ENCODE measurements at regions of chr2 and their contacts with region 1.

Region 1: GRCh38 chr2:98465456-98466226 is 21.0 kb downstream of the INPP4A start:
- DNase-seq: peak; percentile 78
- ATAC-seq: peak; percentile 16
- H3K4me3 Mint-ChIP-seq: peak overlapping the region; percentile 69
- H3K27ac Mint-ChIP-seq: peak overlapping the region; percentile 96
- H3K4me1 Mint-ChIP-seq: peaks cover 90% of the 10 kb centered on the region
- H3K27me3 Mint-ChIP-seq: no peaks in the 10 kb centered on the region

Region 2: DNA sequence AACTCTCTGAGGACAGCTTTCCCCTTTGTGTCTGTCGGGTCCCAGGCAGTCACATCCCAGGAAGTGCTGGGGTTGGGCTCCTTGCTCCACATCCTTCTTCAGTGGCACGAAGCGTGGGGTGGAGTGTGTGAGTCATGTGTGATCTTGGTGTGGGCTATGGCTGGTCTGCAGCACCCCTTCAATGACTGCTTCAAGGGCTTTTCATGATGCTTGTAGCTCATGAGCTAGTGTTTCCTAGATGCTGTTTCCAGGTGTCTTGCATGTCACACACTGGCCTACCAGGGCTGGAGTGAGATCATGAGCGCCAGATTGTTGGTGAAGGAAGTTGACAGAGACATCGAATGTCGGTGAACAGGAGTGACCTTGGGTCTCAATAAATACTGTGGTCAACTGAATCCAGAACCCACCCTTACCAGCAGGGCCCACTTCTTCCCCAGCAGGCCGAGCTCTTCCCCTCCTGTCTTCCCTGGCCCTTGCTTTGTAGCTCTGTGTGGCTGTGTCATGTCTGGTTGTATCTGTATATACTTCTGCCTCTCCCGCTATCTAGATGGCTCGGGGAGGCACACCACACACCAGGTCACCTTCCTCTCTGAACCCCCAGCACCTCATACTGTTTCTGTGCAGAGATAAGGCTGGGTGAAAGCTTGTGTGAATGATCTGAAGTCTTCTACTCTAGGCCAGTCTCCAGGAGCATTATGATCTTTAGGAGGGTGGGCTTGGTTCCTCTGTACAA is 792.3 kb before region 1 on chr2:
- CTCF ChIA-PET with region 1: no interaction called
- POLR2A ChIA-PET with region 1: no interaction called
- intact Hi-C with region 1: no loop called
- DNase-seq: peak; percentile 69
- ATAC-seq: peak; percentile 75
- H3K4me3 Mint-ChIP-seq: peak overlapping the region; percentile 6
- H3K27ac Mint-ChIP-seq: peak overlapping the region; percentile 84
- H3K4me1 Mint-ChIP-seq: peaks cover 35% of the 10 kb centered on the region
- H3K27me3 Mint-ChIP-seq: no peaks in the 10 kb centered on the region

Region 3: DNA sequence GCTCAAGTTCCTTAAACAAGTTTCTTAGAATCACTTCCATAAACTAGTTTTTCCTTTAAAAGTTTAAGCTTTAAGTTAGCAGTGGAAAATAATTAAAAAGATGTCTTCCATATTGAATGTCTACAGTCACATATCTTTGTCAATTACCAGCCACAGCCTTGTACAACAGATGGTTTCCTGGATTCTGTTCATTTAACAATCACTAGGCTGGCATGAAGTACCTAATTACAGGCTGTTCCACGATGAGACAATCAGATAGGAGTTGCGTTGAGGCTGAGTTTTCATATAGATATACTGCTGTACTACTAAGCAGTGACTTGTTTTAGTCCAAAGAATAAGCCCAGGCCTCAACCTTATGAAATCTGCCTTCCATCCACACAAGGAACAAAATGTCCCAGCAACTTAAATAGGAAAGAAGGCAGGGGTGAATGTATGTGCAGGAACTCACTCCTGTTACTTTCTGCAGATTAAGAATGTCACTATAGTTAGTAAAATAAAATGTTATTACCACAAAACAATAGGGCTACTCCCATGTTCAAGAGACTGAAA is 621.3 kb before region 1 on chr2:
- CTCF ChIA-PET with region 1: no interaction called
- POLR2A ChIA-PET with region 1: no interaction called
- intact Hi-C with region 1: no loop called
- DNase-seq: no peak
- ATAC-seq: no peak
- H3K4me3 Mint-ChIP-seq: no peak overlapping the region
- H3K27ac Mint-ChIP-seq: no peak overlapping the region
- H3K4me1 Mint-ChIP-seq: peaks cover 11% of the 10 kb centered on the region
- H3K27me3 Mint-ChIP-seq: no peaks in the 10 kb centered on the region

Region 4: DNA sequence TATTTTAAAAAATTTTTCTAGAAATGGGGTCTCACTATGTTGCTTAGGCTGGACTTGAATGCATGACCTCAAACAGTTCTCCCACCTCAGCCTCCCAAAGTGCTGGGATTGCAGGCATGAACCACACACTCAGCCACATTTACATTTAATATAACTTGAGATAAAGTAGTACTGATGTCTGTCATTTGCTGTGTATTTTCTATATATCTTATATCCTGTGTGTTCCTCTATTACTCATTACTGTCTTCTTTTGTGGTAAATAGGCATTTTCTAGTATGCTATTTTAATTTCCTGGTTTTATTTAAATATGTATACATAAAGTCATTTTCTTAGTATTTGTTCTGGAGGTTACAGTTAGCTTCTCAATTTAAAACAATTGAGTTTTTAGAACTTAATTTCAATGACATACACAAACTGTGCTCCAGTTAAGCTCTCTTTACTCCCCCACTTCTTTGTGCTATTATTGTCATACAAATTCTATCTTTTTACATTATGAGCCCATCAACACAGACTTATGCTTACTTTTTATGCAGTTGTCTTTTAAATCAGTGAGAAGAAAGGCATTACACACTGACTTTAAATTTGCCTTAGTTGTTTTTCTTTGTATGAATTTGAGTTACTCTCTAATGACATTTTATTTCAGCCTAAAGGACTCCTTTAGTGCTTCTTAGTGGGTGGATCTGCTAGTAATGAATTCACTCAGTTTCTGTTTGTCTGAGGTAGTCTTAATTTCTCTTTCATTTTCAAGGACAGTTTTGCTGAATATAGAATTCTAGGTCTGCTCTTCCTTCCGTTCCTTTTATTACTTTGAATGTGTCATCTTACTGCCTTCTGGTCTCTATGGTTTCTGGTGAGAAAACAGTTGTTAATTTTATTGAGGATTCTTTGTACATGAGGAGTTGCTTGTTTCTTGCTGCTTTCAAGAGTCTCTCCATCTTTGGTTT is 27.2 kb before region 1 on chr2:
- CTCF ChIA-PET with region 1: interaction called, 4 read pairs
- POLR2A ChIA-PET with region 1: interaction called, 4 read pairs
- intact Hi-C with region 1: loop called (anchors 1 to 2 kb)
- DNase-seq: no peak
- ATAC-seq: peak; percentile 95
- H3K4me3 Mint-ChIP-seq: no peak overlapping the region
- H3K27ac Mint-ChIP-seq: peak overlapping the region; percentile 71
- H3K4me1 Mint-ChIP-seq: peaks cover 21% of the 10 kb centered on the region
- H3K27me3 Mint-ChIP-seq: no peaks in the 10 kb centered on the region

Region 5: DNA sequence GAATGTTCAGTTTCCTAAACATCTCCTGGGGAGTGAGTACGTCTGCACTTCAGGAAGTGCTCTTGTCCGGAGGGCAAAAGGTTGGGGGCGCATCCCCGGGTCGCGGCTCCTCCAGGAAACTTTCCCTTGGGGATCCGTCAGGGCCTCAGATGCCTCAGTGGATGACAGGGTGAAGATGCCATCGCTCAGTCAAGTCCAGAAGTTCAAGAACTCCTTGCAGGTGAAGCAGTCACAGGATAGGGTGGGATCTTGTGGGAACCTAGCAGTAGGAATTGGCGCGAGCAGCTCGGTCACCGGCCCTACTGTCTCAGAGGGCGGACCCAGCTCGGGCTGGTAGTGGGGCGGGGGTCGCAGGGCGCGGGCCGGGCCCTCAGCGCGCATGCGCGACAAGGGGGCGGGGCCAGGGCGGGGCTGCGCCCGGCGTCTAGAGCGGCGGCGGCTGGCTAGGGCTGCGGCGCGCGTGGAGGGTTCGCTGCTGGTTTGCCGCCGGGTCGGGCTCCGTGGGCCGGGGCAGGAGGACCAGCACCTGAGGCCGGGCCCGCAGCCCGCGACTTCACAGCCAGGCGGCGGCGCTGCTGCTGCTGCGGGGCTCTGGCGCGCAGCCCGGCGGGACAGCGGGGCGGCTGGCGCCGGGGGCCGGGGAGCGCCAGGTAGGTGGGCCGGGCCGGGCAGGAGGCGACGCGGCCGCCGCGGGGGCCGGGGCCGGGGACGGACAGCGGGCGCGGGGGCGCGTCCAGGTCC is 21.0 kb before region 1 on chr2 and contains the start of gene INPP4A:
- CTCF ChIA-PET with region 1: interaction called, 23 read pairs
- POLR2A ChIA-PET with region 1: interaction called, 6 read pairs
- intact Hi-C with region 1: loop called in 1 of 2 experiments (anchors 2 kb)
- DNase-seq: peak; percentile 87
- ATAC-seq: peak; percentile 74
- H3K4me3 Mint-ChIP-seq: peak within 1 kb of the TSS; percentile 83
- H3K27ac Mint-ChIP-seq: peak within 1 kb of the TSS; percentile 94
- H3K4me1 Mint-ChIP-seq: peaks cover 42% of the 10 kb centered on the region
- H3K27me3 Mint-ChIP-seq: no peaks in the 10 kb centered on the region
- total RNA-seq, gene INPP4A: 29.1 to 33.0 TPM

Region 6: DNA sequence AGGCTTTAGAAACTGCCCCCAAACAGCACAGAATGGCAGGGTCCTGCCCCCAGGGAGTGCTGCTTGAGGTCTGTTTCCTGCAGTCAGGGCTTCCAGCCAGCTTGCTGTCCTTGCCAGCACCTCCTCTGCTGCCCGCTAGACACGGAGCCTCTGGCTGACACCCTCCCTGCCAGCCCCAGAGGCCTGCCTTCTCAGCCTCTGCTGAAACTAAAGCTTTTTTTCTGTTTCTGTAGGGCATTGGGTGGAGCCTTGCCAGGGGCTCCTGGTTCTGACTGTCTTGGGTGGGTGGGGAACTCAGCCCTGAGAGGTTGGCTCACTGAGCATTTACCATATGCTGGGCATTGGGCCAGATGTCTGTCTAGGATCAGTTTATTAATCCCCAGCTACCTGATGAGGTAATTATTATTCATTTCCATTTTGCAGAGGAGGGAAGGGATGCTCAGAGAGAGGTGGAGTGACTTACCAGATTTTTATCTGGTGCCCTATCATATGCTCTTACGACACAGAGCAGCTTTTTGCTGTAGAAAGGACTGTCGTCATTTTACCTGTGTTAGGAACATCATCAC is 14.4 kb after region 1 on chr2:
- CTCF ChIA-PET with region 1: interaction called, 11 read pairs
- POLR2A ChIA-PET with region 1: interaction called, 7 read pairs
- intact Hi-C with region 1: loop called in 1 of 2 experiments (anchors 1 kb)
- DNase-seq: peak; percentile 78
- ATAC-seq: peak; percentile 77
- H3K4me3 Mint-ChIP-seq: peak overlapping the region; percentile 6
- H3K27ac Mint-ChIP-seq: peak overlapping the region; percentile 85
- H3K4me1 Mint-ChIP-seq: peaks cover 98% of the 10 kb centered on the region
- H3K27me3 Mint-ChIP-seq: no peaks in the 10 kb centered on the region

Region 7: GRCh38 chr2:98487806-98488651 is 22.4 kb after region 1 on chr2:
- CTCF ChIA-PET with region 1: interaction called, 33 read pairs
- POLR2A ChIA-PET with region 1: interaction called, 4 read pairs
- intact Hi-C with region 1: no loop called
- DNase-seq: peak; percentile 70
- ATAC-seq: peak; percentile 62
- H3K4me3 Mint-ChIP-seq: no peak overlapping the region
- H3K27ac Mint-ChIP-seq: peak overlapping the region; percentile 11
- H3K4me1 Mint-ChIP-seq: peaks cover 85% of the 10 kb centered on the region
- H3K27me3 Mint-ChIP-seq: no peaks in the 10 kb centered on the region

Region 8: GRCh38 chr2:98664327-98664726 is 198.7 kb after region 1 on chr2:
- CTCF ChIA-PET with region 1: no interaction called
- POLR2A ChIA-PET with region 1: no interaction called
- intact Hi-C with region 1: loop called in 1 of 2 experiments (anchors 5 kb)
- DNase-seq: peak; percentile 73
- ATAC-seq: peak; percentile 51
- H3K4me3 Mint-ChIP-seq: peak overlapping the region; percentile 72
- H3K27ac Mint-ChIP-seq: peak overlapping the region; percentile 99
- H3K4me1 Mint-ChIP-seq: peaks cover 67% of the 10 kb centered on the region
- H3K27me3 Mint-ChIP-seq: no peaks in the 10 kb centered on the region

Measured in activated CD4-positive, alpha-beta T cell treated with anti-CD3 and anti-CD28 coated beads for 36 hours (primary cell).